Activated naive CD4-positive, alpha-beta T cell treated with anti-CD3 and anti-CD28 coated beads for 36 hours (primary cell): ENCODE measurements at regions of chr2 and their contacts with region 1.

Region 1: GRCh38 chr2:55232084-55232862 is at the starts of genes CLHC1 and RPS27A:
- DNase-seq: peak; percentile 94
- H3K4me3 Mint-ChIP-seq: peak within 1 kb of the TSS; percentile 97
- H3K27ac Mint-ChIP-seq: peak within 1 kb of the TSS; percentile 95
- H3K4me1 Mint-ChIP-seq: peaks cover 52% of the 10 kb centered on the region
- H3K27me3 Mint-ChIP-seq: no peaks in the 10 kb centered on the region
- total RNA-seq, gene CLHC1: 2.4 to 3.1 TPM
- total RNA-seq, gene RPS27A: 1,468 to 1,556 TPM

Region 2: GRCh38 chr2:53767405-53768241 is 1464.7 kb before region 1 on chr2 and contains the start of gene CHAC2:
- CTCF ChIA-PET with region 1: no interaction called
- intact Hi-C with region 1: loop called (anchors 5 kb)
- DNase-seq: peak; percentile 91
- H3K4me3 Mint-ChIP-seq: peak within 1 kb of the TSS; percentile 94
- H3K27ac Mint-ChIP-seq: peak within 1 kb of the TSS; percentile 93
- H3K4me1 Mint-ChIP-seq: peaks cover 26% of the 10 kb centered on the region
- H3K27me3 Mint-ChIP-seq: no peaks in the 10 kb centered on the region
- total RNA-seq, gene CHAC2: 11.5 to 12.4 TPM

Region 3: DNA sequence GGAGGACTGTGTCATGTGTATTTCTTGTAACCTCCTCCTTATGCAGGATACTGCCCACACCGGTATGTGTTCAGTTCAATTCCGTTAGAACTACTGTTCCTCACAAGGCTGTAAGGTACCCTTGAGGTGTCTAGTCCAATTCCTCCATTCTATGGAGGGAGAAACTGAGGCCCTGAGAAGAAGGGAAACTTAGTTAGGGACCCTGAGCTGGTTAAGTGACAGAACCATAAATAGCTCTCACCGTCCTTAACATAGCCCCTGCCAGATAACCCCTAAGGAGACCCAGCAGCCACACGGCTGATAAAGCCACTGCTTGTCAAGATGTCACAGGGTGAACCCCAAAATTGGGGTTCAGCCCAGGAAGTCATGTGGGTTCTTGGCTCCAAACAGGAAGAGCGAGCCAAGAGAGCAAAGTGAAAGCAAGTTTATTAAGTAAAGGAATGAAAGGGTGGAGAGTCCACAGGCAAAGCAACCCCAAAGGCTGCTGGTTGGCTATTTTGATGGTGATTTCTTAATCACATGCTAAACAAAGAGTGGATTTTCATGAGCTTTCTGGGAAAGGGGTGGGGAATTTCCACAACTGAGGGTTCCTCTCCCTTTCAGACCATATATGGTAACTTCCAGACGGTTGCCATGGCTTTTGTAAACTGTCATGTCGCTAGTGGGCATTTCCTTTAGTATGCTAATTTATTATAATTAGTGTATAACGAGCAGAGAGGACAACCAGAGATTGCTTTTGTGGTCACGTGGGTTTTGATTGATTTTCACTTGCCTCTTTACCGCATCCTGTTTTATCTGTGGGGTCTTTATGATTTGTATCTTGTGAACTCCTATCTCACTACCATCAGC is 98.6 kb before region 1 on chr2:
- CTCF ChIA-PET with region 1: no interaction called
- intact Hi-C with region 1: loop called (anchors 1 kb)
- DNase-seq: peak; percentile 80
- H3K4me3 Mint-ChIP-seq: peak overlapping the region; percentile 75
- H3K27ac Mint-ChIP-seq: peak overlapping the region; percentile 95
- H3K4me1 Mint-ChIP-seq: peaks cover 25% of the 10 kb centered on the region
- H3K27me3 Mint-ChIP-seq: no peaks in the 10 kb centered on the region

Region 4: GRCh38 chr2:55311444-55311870 is 79.2 kb after region 1 on chr2:
- CTCF ChIA-PET with region 1: no interaction called
- intact Hi-C with region 1: loop called (anchors 1 kb)
- DNase-seq: peak; percentile 63
- H3K4me3 Mint-ChIP-seq: no peak overlapping the region
- H3K27ac Mint-ChIP-seq: peak overlapping the region; percentile 57
- H3K4me1 Mint-ChIP-seq: peaks cover 25% of the 10 kb centered on the region
- H3K27me3 Mint-ChIP-seq: no peaks in the 10 kb centered on the region

Region 5: GRCh38 chr2:55519938-55520885 is 287.9 kb after region 1 on chr2:
- CTCF ChIA-PET with region 1: no interaction called
- intact Hi-C with region 1: loop called (anchors 1 kb)
- DNase-seq: peak; percentile 45
- H3K4me3 Mint-ChIP-seq: peak overlapping the region; percentile 99
- H3K27ac Mint-ChIP-seq: peak overlapping the region; percentile 96
- H3K4me1 Mint-ChIP-seq: peaks cover 14% of the 10 kb centered on the region
- H3K27me3 Mint-ChIP-seq: no peaks in the 10 kb centered on the region